ENCODE measurements at regions of chr18 and their contacts with region 1.

Region 1: DNA sequence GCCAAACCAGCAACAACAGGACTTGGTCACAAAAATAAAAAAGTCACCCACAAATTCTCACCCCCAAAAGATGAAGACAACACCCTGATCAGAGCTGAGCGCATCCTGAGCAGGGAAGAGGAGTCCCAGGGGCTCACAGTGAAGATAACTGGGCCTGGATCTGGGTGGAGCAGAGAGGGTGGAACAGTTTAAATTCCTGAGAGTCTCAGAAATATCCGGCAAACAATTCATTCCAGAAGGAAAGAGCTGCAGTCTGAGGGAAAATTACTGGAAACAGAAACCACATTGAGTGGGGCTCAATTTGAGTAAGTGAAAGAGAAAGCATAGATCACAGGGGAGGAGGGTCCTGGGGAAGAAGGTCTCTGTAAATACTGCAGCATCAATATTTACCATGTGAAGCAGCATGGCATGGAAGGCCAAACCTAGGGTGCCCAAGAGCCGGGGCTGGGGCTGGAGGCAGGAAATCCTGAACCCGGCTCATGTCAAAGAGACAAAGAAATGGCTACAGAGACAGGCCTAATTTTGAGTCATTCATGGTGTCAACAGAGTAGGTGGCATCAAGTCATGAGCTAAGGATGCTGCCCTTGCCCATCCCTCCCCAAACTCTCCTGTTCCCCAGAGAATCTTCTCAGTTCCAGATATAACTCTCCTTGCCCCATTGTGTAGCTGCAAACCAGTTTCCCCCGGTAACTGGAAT is 61.4 kb upstream of the ZBTB7C start:
- DNase-seq: no peak
- H3K4me3 ChIP-seq: no peak overlapping the region
- H3K4me3 Mint-ChIP-seq: no peak overlapping the region
- H3K27ac Mint-ChIP-seq: no peak overlapping the region
- H3K4me1 ChIP-seq: no peaks in the 10 kb centered on the region
- H3K4me1 Mint-ChIP-seq: no peaks in the 10 kb centered on the region
- H3K27me3 ChIP-seq: no peaks in the 10 kb centered on the region
- H3K27me3 Mint-ChIP-seq: peaks cover 2% of the 10 kb centered on the region
- CTCF ChIP-seq: no peak

Region 2: DNA sequence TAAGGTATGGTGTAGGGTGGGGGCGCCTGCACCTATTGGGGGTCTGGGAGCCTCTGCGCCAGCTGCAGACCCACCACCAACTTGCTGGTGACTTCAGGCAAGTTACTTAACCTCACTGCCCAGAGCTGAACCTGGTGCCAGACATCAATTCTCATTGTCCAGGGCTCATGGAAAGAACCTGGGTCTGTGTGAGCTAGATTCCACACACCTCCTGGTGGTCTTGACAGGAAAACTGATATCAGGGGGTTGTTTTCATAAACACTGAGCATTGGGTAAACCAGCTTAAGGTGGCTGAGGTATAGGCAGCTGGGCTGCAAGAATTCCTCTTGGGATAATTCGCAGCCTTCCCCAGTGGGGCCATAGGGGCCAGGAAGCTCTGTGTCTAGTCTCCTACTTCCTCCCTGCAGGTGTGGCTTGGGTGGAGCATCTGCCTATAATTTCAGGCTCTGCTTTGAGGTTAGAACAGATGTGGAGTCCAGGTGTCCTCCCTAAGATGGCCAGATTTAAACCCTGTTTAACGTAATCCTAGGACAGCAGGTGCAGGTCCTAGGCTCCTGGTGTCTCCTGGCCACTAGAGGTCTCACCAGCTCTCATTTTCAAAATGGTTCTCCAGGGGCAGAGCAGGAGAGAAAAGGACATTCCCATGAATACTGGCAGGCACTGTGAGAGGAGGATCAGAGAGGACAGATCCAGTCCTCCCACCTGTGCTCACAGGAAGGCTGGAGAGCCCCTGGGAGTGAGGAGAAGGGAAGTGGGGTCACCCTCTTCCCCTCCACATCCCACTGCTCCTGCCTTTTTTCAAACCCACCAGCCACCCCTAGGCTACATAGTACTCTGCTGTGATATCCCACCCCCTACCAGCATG is 439.8 kb before region 1 on chr18:
- CTCF ChIA-PET with region 1: no interaction called
- POLR2A ChIA-PET with region 1: no interaction called
- intact Hi-C with region 1: loop called (anchors 5 kb)
- DNase-seq: peak; percentile 41 to 52
- H3K4me3 ChIP-seq: no peak overlapping the region
- H3K4me3 Mint-ChIP-seq: no peak overlapping the region
- H3K27ac Mint-ChIP-seq: no peak overlapping the region
- H3K4me1 ChIP-seq: no peaks in the 10 kb centered on the region
- H3K4me1 Mint-ChIP-seq: no peaks in the 10 kb centered on the region
- H3K27me3 ChIP-seq: no peaks in the 10 kb centered on the region
- H3K27me3 Mint-ChIP-seq: peaks cover 4% of the 10 kb centered on the region
- CTCF ChIP-seq: peak in 1 of 2 experiments; percentile 67

Region 3: DNA sequence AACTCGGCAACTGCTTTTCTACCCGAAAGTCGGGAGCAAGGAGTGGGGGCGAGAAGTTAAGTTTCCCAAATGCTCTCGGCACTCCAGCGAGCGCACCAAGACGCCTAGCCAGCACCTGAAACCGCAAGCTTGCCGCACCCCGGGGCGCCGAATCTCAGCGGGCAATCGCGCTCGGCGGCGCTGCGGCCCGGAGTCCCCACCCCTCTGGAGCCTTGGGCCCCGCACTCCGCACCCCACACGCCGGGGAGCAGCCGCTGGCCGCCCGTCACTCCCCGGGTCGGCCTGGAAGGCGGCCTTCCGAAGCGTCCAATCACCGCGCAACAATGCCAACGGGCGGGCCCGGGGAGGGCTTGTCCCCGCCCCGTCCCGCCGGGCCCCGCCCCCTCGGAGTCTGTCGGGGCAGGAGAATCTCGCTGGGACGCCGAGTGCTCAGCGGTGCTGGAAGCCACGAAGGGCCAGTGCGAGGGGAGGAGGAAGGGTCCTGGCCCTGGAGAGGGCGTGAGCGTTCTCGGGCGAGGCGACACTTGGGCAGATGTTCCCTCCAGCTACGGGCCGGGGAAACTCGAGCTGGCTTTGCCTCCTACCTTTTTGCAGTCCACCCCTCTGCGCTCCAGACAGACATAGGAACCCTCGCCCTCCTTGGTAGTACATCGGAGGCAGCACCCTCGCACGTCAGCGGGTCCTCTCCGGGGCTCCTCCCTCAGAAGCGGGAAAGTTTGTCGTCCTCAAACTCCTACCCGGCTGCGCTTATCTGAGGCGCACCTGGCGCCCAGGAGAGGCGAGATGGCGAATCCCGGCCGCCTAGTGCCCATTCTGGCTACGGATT is 60.3 kb before region 1 on chr18:
- CTCF ChIA-PET with region 1: no interaction called
- POLR2A ChIA-PET with region 1: no interaction called
- intact Hi-C with region 1: no loop called
- DNase-seq: peak; percentile 75 to 85
- H3K4me3 ChIP-seq: peak overlapping the region; percentile 47
- H3K4me3 Mint-ChIP-seq: peak overlapping the region; percentile 67
- H3K27ac Mint-ChIP-seq: no peak overlapping the region
- H3K4me1 ChIP-seq: no peaks in the 10 kb centered on the region
- H3K4me1 Mint-ChIP-seq: no peaks in the 10 kb centered on the region
- H3K27me3 ChIP-seq: 0 out of 2 replicates have a peak, but pooled peaks cover 2% of the 10 kb centered on the region
- H3K27me3 Mint-ChIP-seq: peaks cover 8% of the 10 kb centered on the region
- CTCF ChIP-seq: no peak

Region 4: DNA sequence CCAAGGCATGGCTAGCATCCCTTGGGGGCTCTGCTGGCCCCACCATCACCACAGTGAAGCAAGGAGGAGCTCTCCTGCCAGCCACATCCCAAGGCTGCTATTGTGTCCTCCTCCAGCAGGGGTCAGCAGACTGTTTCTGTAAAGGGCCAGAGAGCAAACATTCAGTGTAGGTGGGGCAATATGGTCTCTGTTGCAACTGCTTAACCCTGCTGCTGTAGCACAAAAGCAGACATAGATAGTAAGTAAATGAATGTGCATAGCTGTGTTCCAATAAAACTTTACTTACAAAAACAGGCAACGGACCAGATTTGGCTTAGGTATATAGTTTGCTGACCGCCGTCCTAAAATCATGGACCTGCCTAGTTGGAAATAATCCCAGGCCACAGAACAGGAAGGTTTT is 25.1 kb before region 1 on chr18:
- CTCF ChIA-PET with region 1: interaction called, 6 read pairs
- POLR2A ChIA-PET with region 1: no interaction called
- intact Hi-C with region 1: loop called (anchors 1 kb)
- DNase-seq: peak; percentile 71 to 79
- H3K4me3 ChIP-seq: no peak overlapping the region
- H3K4me3 Mint-ChIP-seq: no peak overlapping the region
- H3K27ac Mint-ChIP-seq: no peak overlapping the region
- H3K4me1 ChIP-seq: no peaks in the 10 kb centered on the region
- H3K4me1 Mint-ChIP-seq: no peaks in the 10 kb centered on the region
- H3K27me3 ChIP-seq: no peaks in the 10 kb centered on the region
- H3K27me3 Mint-ChIP-seq: peaks cover 2% of the 10 kb centered on the region
- CTCF ChIP-seq: peak; percentile 60 to 66

Region 5: DNA sequence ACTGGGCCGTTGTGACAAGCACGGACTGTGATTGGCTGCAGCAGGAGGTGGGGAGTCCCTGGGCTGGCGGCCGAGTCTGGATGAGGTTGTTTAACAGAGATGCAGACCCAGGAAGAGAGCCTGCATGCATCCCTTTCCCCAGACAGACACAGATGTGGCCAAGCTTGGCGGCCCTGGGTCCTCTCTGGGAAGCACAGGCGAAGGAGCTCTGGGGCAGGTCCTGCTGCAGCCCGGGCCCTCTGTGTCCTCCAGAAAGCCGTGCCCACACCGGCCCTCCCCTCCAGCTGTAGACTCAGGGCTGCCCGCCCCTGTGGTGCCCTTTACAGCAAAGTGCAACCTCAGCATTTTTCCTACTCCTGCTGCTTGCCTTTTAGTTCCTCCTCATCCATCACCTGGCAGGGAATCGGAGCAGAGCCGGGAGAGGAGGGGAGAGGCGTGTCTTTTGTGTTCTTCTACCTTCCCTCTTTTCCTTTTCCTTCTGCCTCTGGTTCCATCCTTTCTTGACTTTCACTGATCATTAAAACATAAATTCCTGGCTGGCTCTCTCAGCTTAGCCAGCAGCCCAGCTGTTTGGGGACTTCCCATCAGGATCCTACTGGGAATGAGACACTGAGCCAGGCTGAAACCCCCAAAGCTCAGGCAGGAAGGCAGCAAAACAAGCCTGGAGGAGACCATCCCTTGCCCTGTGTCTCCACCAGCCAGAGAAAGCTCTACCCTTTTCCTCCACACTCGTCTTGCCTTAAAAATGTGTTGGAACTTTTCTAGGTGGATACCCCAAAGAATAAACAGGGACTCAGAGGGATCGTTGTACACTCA is 143.2 kb after region 1 on chr18:
- CTCF ChIA-PET with region 1: no interaction called
- POLR2A ChIA-PET with region 1: no interaction called
- intact Hi-C with region 1: no loop called
- DNase-seq: no peak
- H3K4me3 ChIP-seq: no peak overlapping the region
- H3K4me3 Mint-ChIP-seq: no peak overlapping the region
- H3K27ac Mint-ChIP-seq: no peak overlapping the region
- H3K4me1 ChIP-seq: no peaks in the 10 kb centered on the region
- H3K4me1 Mint-ChIP-seq: no peaks in the 10 kb centered on the region
- H3K27me3 ChIP-seq: no peaks in the 10 kb centered on the region
- H3K27me3 Mint-ChIP-seq: no peaks in the 10 kb centered on the region
- CTCF ChIP-seq: no peak

Measured in Caco-2 (cell line).